Activated T-helper 2 cell treated with anti-CD3 and anti-CD28 coated beads, Interferon-gamma antibody, Interleukin-2, Interleukin-4, amounts not matched to agents 10 μg/mL and 5 μg/mL and 100 μg/mL, durations not matched to agents 14 hours and 24 hours and 36 hours (primary cell): ENCODE measurements at regions of chr1 and their contacts with region 1.

Region 1: DNA sequence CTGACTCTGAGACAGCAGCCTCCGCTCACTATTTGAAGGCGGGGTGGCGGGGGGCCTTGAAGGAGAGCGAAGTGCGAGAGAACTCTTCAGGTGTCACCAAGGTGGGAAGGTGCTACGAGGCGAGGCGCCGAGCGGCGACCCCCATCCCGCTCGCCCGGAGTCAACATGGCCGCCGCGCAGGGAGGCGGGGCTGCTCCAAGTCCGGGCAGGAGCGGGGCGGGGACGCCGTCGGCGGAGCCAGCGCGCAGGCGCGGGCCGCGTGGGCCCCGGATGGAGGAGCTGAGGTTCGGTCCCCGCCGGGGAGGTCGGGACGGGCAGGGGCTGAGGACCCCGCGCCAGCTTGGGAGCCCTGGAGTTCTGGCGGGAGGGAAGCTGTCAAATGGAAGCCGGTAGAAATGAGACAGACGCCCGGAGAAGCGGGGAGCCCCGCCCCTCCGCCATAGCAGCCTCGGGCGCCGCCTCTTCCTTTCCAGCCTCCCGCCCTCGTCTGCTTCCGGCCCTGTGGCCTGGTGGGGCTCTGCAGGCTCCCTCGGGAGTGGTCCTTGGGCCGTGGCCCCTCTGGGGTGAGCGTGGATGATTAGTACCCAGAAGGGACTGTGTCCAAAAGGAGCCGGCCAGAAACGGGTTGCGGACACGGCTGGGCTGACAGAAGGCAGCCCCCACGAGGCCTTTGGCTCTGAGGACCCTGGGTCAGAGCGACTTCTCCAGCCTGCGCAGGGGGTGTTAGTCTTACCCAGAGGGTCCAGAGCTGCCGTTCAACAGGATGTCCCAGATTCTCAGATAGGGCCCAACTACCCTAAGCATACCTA is at the start of gene PIGV:
- DNase-seq: peak; percentile 86
- H3K4me3 Mint-ChIP-seq: peak within 1 kb of the TSS; percentile 98
- H3K27ac Mint-ChIP-seq: peak within 1 kb of the TSS; percentile 100
- H3K4me1 Mint-ChIP-seq: peaks cover 61% of the 10 kb centered on the region
- H3K27me3 Mint-ChIP-seq: no peaks in the 10 kb centered on the region
- total RNA-seq, gene PIGV: 19.4 and 20.1 TPM in 2 replicates

Region 2: GRCh38 chr1:26541816-26542711 is 245.8 kb before region 1 on chr1:
- intact Hi-C with region 1: loop called (anchors 1 kb)
- DNase-seq: peak; percentile 73
- H3K4me3 Mint-ChIP-seq: peak overlapping the region; percentile 77
- H3K27ac Mint-ChIP-seq: peak overlapping the region; percentile 97
- H3K4me1 Mint-ChIP-seq: peaks cover 67% of the 10 kb centered on the region
- H3K27me3 Mint-ChIP-seq: no peaks in the 10 kb centered on the region

Region 3: DNA sequence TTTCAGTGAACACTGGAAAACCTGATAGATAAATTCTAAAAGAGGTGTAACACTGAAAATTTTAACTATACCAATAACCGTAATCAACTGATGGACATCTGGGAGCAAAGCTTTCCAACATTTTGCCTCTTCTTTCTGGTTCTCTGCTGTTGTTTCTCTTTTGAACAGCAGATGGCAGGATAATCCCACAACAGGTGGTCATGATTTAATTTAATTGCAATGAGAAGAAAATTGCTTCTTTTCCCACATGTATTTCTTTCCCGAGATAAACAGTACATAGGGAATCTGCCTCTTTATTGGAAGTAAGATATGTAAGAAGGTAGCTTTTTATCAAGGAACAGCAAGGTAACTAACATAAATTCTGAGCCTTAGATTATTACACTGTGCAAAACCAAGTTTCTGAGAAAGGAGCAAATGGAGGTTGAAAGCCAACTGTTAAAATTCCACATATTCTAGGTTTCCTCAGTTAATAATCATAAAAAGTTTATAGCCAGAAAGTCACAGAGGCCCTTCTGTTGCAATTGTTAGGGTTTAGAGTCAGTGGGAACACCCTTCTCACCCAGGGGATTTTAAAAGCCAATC is 185.4 kb before region 1 on chr1:
- intact Hi-C with region 1: loop called (anchors 1 kb)
- DNase-seq: no peak
- H3K4me3 Mint-ChIP-seq: no peak overlapping the region
- H3K27ac Mint-ChIP-seq: no peak overlapping the region
- H3K4me1 Mint-ChIP-seq: peaks cover 14% of the 10 kb centered on the region
- H3K27me3 Mint-ChIP-seq: peaks cover 4% of the 10 kb centered on the region

Region 4: DNA sequence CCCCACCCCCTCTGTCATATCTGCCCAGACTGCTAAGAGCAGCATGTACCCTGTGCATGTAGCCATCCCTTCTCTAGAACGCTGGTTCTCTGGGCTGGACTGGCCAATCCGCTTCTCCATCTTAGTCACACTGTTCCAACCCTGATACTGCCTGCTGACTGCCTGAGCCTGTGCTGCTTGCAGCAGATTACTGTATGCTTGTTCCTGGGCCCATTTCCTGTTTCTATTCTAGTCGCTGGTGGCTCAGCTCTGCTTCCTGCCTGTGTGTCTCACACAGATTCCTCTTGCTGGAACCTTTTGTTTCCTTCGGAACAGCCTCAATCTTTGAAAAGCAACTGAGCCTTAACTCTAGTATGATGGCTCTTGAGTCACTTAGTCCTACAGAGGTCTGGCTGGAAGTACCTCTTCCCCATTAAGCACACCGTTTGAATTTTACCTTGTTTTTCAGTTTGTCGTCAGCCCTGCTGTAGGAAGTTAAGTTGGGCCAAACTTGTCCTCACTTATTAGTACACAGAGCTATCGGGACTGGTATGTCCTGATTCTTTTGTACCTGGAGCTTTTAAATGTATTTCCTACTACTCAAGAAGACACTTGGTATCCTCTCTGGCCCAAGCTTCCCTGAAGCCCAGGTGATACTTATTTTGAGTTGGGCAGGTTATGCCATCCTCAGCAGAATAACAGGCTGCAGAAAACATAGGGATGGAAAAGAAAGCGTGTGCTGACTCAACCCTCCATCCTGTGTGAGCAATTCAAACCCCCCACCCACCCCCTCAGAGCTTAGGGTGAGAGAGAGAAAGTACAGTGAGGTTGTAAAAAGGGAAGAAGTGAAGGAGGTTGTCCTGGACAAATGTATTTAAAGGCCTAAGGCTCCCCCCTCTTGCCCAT is 43.6 kb before region 1 on chr1:
- intact Hi-C with region 1: loop called (anchors 1 kb)
- DNase-seq: peak; percentile 87
- H3K4me3 Mint-ChIP-seq: peak overlapping the region; percentile 56
- H3K27ac Mint-ChIP-seq: peak overlapping the region; percentile 92
- H3K4me1 Mint-ChIP-seq: peaks cover 71% of the 10 kb centered on the region
- H3K27me3 Mint-ChIP-seq: no peaks in the 10 kb centered on the region

Region 5: DNA sequence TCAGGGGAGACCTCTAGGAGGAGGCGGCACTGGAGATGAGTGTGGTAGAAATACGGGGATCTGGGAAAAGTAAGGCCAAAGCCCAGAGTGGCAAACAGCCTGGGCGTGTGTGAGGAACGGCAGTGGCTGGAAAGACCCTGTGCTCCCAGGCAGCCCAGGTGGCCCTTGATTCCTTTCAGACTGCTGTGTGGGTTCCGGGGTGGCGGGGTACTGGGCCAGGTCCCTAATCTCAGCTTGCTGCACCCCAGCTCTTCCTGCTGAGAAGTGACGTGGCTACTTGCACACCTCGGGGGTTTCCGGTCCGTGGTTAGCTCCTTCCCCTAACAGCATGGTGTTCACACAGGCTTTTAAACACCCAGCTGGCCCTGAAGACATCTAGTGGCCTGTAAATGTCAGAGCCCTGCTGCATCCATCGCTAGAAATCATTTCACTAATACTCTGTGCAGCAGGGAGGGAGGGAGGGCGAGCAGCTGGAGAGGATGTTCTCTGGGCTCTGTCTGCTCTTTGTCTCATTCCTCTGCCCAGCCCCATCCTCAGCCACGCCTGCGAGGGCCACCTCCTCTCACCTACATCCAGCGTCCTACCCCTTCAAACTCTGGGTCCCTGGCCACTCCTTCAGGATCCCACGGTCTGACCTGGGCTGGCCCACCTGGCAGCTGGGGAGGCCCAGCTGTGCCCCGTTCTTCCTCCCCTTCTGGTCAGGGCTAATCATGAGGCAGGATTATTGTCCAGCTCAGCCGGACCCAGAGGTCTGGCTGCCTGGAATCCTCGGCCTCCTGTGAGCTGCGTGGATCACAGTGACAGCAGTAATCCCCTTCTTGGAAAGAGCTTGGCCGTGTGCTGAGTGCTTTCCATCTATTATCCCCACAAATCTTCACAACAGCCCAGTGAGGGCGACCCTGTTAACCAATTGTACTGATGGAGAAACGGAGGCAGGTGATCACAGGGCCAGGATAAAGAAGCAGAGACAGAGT is 45.8 kb after region 1 on chr1:
- intact Hi-C with region 1: loop called (anchors 2 kb)
- DNase-seq: peak; percentile 87
- H3K4me3 Mint-ChIP-seq: peak overlapping the region; percentile 73
- H3K27ac Mint-ChIP-seq: peak overlapping the region; percentile 96
- H3K4me1 Mint-ChIP-seq: peaks cover 49% of the 10 kb centered on the region
- H3K27me3 Mint-ChIP-seq: no peaks in the 10 kb centered on the region

Region 6: DNA sequence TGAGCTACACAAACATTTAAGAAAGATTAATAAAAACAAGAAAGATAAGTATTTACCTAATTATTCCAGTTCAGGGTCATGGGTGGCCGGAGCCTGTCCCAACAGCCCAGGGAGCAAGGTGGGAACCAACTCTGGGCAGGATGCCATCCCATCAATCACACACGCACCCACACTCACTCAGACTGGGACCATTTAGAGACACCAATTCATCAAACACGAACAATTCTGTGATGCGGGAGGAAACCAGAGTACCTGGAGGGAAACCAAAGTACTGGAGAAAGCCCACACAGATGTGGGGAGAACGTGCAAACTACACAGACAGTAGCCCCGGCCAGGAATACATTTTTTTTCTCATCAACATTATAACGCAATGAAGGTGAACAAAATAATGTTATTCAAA is 685.8 kb after region 1 on chr1:
- intact Hi-C with region 1: no loop called
- DNase-seq: no peak
- H3K4me3 Mint-ChIP-seq: no peak overlapping the region
- H3K27ac Mint-ChIP-seq: peak overlapping the region; percentile 3
- H3K4me1 Mint-ChIP-seq: peaks cover 51% of the 10 kb centered on the region
- H3K27me3 Mint-ChIP-seq: no peaks in the 10 kb centered on the region